Heart right ventricle (tissue), 16 donors: ENCODE measurements at regions of chr15 and their contacts with region 1.

Region 1: GRCh38 chr15:26449291-26449690 is 323.6 kb downstream of the GABRB3 start:
- DNase-seq: no peak
- ATAC-seq: no peak
- H3K4me3 ChIP-seq: no peak overlapping the region
- H3K27ac ChIP-seq: no peak overlapping the region
- H3K4me1 ChIP-seq: no peaks in the 10 kb centered on the region
- H3K27me3 ChIP-seq: no peaks in the 10 kb centered on the region
- CTCF ChIP-seq: no peak

Region 2: GRCh38 chr15:26391567-26392194 is 57.6 kb before region 1 on chr15:
- intact Hi-C with region 1: loop called in 1 of 10 experiments (anchors 10 kb)
- DNase-seq: no peak
- ATAC-seq: peak in 6 of 8 donors; percentile 46 to 62 (median 53)
- H3K4me3 ChIP-seq: no peak overlapping the region
- H3K27ac ChIP-seq: peak overlapping the region in 2 of 10 donors; percentile 25 to 34
- H3K4me1 ChIP-seq: peaks cover 0 to 4% (median 0%) of the 10 kb centered on the region in 9 donors
- H3K27me3 ChIP-seq: no peaks in the 10 kb centered on the region
- CTCF ChIP-seq: no peak

Region 3: GRCh38 chr15:26525096-26525495 is 75.8 kb after region 1 on chr15:
- intact Hi-C with region 1: no loop called
- DNase-seq: no peak
- ATAC-seq: no peak
- H3K4me3 ChIP-seq: no peak overlapping the region
- H3K27ac ChIP-seq: no peak overlapping the region
- H3K4me1 ChIP-seq: no peaks in the 10 kb centered on the region
- H3K27me3 ChIP-seq: no peaks in the 10 kb centered on the region
- CTCF ChIP-seq: no peak